Panc1 (cell line): ENCODE measurements at regions of chr1 and their contacts with region 1.

Region 1: GRCh38 chr1:28354121-28354520 is 15.4 kb upstream of the PHACTR4 start:
- DNase-seq: no peak
- ATAC-seq: peak; percentile 24; the same call in 1 of the 2 replicates
- H3K4me3 ChIP-seq: no peak overlapping the region
- H3K27ac ChIP-seq: no peak overlapping the region
- H3K4me1 ChIP-seq: no peaks in the 10 kb centered on the region
- H3K27me3 ChIP-seq: no peaks in the 10 kb centered on the region
- CTCF ChIP-seq: no peak

Region 2: GRCh38 chr1:28322194-28322593 is 31.9 kb before region 1 on chr1:
- CTCF ChIA-PET with region 1: no interaction called
- POLR2A ChIA-PET with region 1: interaction called, 19 read pairs
- in situ Hi-C with region 1: no loop called
- intact Hi-C with region 1: no loop called
- DNase-seq: no peak
- ATAC-seq: no peak
- H3K4me3 ChIP-seq: no peak overlapping the region
- H3K27ac ChIP-seq: no peak overlapping the region
- H3K4me1 ChIP-seq: no peaks in the 10 kb centered on the region
- H3K27me3 ChIP-seq: no peaks in the 10 kb centered on the region
- CTCF ChIP-seq: no peak

Region 3: DNA sequence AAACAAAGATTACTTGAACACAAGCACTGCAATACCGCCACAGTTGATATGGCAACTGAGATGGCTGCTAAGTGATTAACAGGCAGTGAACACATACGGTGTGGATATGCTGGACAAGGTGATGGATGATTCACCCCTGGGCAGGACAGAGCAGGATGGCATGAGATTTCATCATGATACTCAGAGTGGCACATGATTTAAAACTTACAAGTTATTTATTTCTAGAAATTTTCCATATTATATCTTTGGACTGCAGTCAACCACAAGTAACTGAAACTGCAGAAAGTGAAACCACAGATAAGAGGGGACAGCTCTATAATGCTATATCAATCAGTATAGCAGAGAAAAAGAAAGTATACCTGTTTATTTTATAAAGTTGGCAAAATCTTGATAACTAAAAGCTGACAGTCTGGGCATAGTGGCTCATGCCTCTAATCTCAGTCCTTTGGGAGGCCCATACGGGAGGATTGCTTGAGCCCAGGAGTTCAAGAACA is 63.4 kb after region 1 on chr1:
- CTCF ChIA-PET with region 1: no interaction called
- POLR2A ChIA-PET with region 1: interaction called, 10 read pairs
- in situ Hi-C with region 1: no loop called
- intact Hi-C with region 1: no loop called
- DNase-seq: peak; percentile 85
- ATAC-seq: peak; percentile 79
- H3K4me3 ChIP-seq: no peak overlapping the region
- H3K27ac ChIP-seq: peak overlapping the region; percentile 29; the same call in 1 of the 2 replicates
- H3K4me1 ChIP-seq: peaks cover 8% of the 10 kb centered on the region; the same call in 1 of the 2 replicates
- H3K27me3 ChIP-seq: no peaks in the 10 kb centered on the region
- CTCF ChIP-seq: no peak